Calu3 (cell line): ENCODE measurements at regions of chr7 and their contacts with region 1.

Region 1: GRCh38 chr7:91784463-91784862 is 96.0 kb downstream of the MTERF1 start:
- DNase-seq: no peak
- H3K4me3 Mint-ChIP-seq: no peak overlapping the region
- H3K27ac Mint-ChIP-seq: no peak overlapping the region
- H3K4me1 Mint-ChIP-seq: no peaks in the 10 kb centered on the region
- H3K27me3 Mint-ChIP-seq: no peaks in the 10 kb centered on the region
- CTCF ChIP-seq: no peak

Region 2: GRCh38 chr7:91082852-91083495 is 701.5 kb before region 1 on chr7:
- CTCF ChIA-PET with region 1: no interaction called
- intact Hi-C with region 1: loop called (anchors 5 kb)
- DNase-seq: no peak
- H3K4me3 Mint-ChIP-seq: no peak overlapping the region
- H3K27ac Mint-ChIP-seq: no peak overlapping the region
- H3K4me1 Mint-ChIP-seq: no peaks in the 10 kb centered on the region
- H3K27me3 Mint-ChIP-seq: no peaks in the 10 kb centered on the region
- CTCF ChIP-seq: no peak

Region 3: DNA sequence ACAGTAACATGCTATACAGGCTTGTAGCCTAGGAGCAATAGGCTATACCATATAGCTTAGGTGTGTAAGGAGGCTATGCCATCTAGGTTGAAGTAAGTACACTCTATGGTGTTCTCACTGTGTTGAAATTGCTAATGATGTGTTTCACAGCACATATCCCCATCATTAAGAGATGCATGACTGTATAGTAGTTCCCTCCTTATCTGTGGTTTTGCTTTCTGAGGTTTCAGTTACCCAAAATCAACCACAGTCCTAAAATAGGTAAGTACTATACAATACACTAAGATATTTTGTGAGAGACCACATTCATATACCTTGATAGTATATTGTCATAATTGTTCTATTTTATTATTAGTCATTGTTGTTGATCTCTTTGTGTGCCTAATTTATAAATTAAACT is 507.6 kb before region 1 on chr7:
- CTCF ChIA-PET with region 1: no interaction called
- intact Hi-C with region 1: no loop called
- DNase-seq: no peak
- H3K4me3 Mint-ChIP-seq: no peak overlapping the region
- H3K27ac Mint-ChIP-seq: no peak overlapping the region
- H3K4me1 Mint-ChIP-seq: no peaks in the 10 kb centered on the region
- H3K27me3 Mint-ChIP-seq: no peaks in the 10 kb centered on the region
- CTCF ChIP-seq: no peak

Region 4: GRCh38 chr7:91288208-91288824 is 496.1 kb before region 1 on chr7:
- CTCF ChIA-PET with region 1: no interaction called
- intact Hi-C with region 1: loop called (anchors 2 kb)
- DNase-seq: peak; percentile 49
- H3K4me3 Mint-ChIP-seq: no peak overlapping the region
- H3K27ac Mint-ChIP-seq: no peak overlapping the region
- H3K4me1 Mint-ChIP-seq: peaks cover 33% of the 10 kb centered on the region
- H3K27me3 Mint-ChIP-seq: no peaks in the 10 kb centered on the region
- CTCF ChIP-seq: peak; percentile 21

Region 5: DNA sequence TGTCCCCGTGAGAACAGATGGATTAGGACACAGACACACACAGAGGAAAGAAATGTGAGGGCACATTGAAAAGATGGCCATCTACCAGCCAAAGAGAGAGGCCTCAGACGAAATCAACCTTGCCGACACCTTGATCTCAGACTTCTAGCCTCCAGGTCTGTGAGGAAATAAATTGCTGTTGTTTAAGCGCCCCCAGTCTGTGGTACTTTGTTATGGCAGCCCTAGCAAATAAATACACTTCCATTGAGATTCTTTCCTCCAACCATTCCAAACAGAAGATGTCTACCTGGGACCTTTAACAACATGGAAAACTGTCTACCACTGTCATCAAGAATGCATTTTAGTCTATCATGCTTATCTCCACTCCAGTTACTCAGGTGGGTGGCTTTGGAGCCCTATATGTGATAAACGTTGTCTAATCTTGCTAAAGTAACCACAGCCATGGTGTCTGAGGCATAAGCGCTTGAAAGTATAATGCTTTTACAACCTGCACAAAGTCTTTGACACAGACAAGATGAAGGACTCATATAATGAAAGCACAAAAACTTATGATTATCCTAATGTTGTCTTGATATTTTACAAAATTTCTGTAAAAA is 148.2 kb before region 1 on chr7:
- CTCF ChIA-PET with region 1: no interaction called
- intact Hi-C with region 1: loop called (anchors 5 kb)
- DNase-seq: peak; percentile 34
- H3K4me3 Mint-ChIP-seq: no peak overlapping the region
- H3K27ac Mint-ChIP-seq: no peak overlapping the region
- H3K4me1 Mint-ChIP-seq: peaks cover 26% of the 10 kb centered on the region
- H3K27me3 Mint-ChIP-seq: no peaks in the 10 kb centered on the region
- CTCF ChIP-seq: peak; percentile 31